PC-9 (cell line): ENCODE measurements at regions of chr14 and their contacts with region 1.

Region 1: DNA sequence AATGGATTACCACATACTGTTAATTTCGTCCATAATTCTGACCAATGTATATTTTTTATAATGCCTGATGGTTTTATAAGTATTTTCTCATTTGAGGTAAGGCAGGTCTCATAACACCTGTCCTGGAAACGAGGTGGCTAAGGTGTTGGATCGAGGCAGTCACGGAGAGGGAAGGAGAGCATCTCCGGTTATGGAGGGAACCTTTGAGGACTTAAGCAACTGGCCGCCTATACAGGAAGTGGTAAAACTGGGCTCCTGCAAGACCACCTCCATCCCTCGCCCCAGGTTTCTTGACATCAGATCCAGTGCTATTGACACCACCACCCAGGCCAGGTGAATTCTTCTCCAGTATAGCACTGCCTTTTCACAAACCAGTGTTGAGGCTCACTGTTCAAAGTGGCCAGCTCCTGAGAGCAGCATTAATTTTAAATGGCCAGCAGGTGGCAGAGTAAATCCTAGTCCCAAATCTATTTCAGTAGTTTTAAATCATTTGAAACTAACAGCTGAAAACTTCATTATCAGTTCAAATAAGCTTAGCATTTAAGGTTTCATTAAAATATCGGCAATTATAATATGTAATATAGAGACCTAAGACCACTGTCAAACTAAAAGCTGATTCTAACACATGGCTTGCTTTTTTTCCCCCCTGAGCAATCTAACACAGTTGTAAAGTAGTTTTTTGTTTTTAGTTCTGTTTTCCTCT is 100.8 kb downstream of the PPM1A start:
- DNase-seq: peak in 1 of 2 experiments; percentile 29
- H3K4me3 ChIP-seq: no peak overlapping the region
- H3K27ac ChIP-seq: no peak overlapping the region
- H3K4me1 ChIP-seq: no peaks in the 10 kb centered on the region
- H3K27me3 ChIP-seq: no peaks in the 10 kb centered on the region
- CTCF ChIP-seq: peak; percentile 87

Region 2: GRCh38 chr14:59511916-59512575 is 837.8 kb before region 1 on chr14:
- CTCF ChIA-PET with region 1: no interaction called
- POLR2A ChIA-PET with region 1: no interaction called
- intact Hi-C with region 1: no loop called
- DNase-seq: no peak
- H3K4me3 ChIP-seq: no peak overlapping the region
- H3K27ac ChIP-seq: no peak overlapping the region
- H3K4me1 ChIP-seq: no peaks in the 10 kb centered on the region
- H3K27me3 ChIP-seq: no peaks in the 10 kb centered on the region
- CTCF ChIP-seq: peak; percentile 55

Region 3: DNA sequence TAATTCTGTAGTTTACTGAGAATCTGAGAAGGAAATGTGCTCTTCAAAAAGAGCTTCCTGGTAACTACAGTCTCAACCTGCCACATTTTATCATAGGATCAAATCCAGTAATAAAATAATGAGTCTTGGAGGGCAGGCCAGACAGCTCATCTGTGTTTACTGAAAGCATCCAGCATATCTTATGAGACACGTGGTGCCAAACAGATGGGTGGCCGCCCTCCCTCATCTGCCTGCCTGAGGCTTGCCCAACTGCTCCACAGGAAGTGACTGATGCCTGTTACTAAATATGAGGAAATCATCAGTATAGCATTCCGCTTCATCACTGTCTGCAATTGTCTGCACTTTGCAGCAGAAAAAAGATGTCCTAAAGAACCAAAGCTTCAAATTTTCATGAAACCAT is 198.1 kb before region 1 on chr14:
- CTCF ChIA-PET with region 1: no interaction called
- POLR2A ChIA-PET with region 1: no interaction called
- intact Hi-C with region 1: no loop called
- DNase-seq: peak; percentile 70 to 77
- H3K4me3 ChIP-seq: no peak overlapping the region
- H3K27ac ChIP-seq: peak overlapping the region; percentile 57
- H3K4me1 ChIP-seq: peaks cover 21% of the 10 kb centered on the region
- H3K27me3 ChIP-seq: no peaks in the 10 kb centered on the region
- CTCF ChIP-seq: no peak

Region 4: DNA sequence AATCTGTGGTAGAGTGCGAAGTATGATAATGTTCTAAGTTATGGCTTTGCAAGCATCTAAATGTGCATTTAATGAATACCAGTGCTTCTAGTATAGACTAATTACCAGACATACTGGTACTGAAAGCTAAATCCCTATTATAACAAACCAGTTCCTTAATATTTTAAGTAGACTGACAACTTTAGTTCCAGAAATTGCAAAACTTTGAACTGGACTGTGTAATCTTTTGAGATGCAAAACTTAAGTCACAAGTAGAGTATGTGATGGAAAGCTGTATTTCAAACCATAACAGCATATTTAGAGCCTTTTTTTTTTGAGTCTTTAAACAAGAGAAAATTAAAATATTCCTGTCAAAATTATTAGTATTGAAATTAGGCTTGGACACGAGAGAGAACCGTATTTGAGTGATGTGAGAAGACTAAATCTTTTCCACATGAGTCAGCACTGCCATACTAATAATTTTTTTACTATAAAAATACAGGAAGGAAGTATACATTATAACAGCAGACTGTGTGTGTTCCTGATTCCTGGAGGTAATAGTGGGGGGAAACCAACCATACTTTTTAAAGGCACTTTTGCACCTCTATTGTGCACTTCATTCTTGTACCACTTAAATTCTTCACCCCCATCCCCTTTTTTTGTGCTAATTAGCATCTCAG is 55.3 kb before region 1 on chr14:
- CTCF ChIA-PET with region 1: no interaction called
- POLR2A ChIA-PET with region 1: no interaction called
- intact Hi-C with region 1: no loop called
- DNase-seq: no peak
- H3K4me3 ChIP-seq: no peak overlapping the region
- H3K27ac ChIP-seq: no peak overlapping the region
- H3K4me1 ChIP-seq: no peaks in the 10 kb centered on the region
- H3K27me3 ChIP-seq: no peaks in the 10 kb centered on the region
- CTCF ChIP-seq: no peak

Region 5: GRCh38 chr14:60485598-60486251 is 135.9 kb after region 1 on chr14 and contains the start of gene C14orf39:
- CTCF ChIA-PET with region 1: no interaction called
- POLR2A ChIA-PET with region 1: no interaction called
- intact Hi-C with region 1: loop called (anchors 5 kb)
- DNase-seq: no peak
- H3K4me3 ChIP-seq: no peak within 1 kb of the TSS
- H3K27ac ChIP-seq: no peak within 1 kb of the TSS
- H3K4me1 ChIP-seq: no peaks in the 10 kb centered on the region
- H3K27me3 ChIP-seq: no peaks in the 10 kb centered on the region
- CTCF ChIP-seq: no peak
- total RNA-seq, gene C14orf39: not detected in 2 replicates

Region 6: DNA sequence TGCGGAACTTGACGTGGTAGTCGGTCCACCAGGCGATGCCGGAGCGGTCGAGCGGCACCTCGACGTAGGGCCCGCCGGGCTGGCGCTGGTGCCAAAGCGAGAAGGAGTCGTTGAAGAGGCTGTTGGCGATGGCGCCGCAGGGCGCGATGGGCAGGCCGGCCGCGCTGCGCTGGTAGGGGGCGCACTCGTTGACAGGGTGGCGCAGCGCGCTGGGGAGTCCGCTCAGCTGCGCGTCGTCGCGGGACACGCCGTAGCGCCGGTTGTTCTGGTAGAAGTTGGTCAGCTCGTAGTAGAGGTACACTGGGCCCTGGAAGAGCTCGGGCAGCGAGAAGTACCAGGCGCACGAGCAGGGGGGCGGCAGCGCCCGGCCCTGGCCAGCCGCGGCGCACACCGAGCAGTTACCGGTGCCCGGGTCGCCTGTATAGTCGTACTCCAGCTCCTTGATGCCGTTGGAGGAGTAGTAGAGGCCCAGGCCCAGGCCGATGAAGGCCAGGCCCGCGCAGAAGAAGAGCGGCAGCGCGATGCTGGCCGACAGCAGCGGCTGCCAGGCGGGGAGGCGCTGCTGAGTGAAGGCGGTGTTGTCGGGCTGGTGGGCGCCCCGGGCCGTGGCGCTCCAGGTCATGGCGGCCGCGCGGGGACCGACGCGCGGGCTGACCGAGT is 930.8 kb after region 1 on chr14:
- CTCF ChIA-PET with region 1: no interaction called
- POLR2A ChIA-PET with region 1: no interaction called
- intact Hi-C with region 1: loop called (anchors 10 kb)
- DNase-seq: peak; percentile 61 to 80
- H3K4me3 ChIP-seq: peak overlapping the region; percentile 93
- H3K27ac ChIP-seq: peak overlapping the region; percentile 86
- H3K4me1 ChIP-seq: peaks cover 44% of the 10 kb centered on the region
- H3K27me3 ChIP-seq: no peaks in the 10 kb centered on the region
- CTCF ChIP-seq: peak; percentile 70

Region 7: GRCh38 chr14:61287196-61287595 is 937.4 kb after region 1 on chr14:
- CTCF ChIA-PET with region 1: interaction called, 20 read pairs
- POLR2A ChIA-PET with region 1: no interaction called
- intact Hi-C with region 1: loop called (anchors 10 kb)
- DNase-seq: no peak
- H3K4me3 ChIP-seq: no peak overlapping the region
- H3K27ac ChIP-seq: no peak overlapping the region
- H3K4me1 ChIP-seq: peaks cover 21% of the 10 kb centered on the region
- H3K27me3 ChIP-seq: no peaks in the 10 kb centered on the region
- CTCF ChIP-seq: no peak